AG04449 (cell line): ENCODE measurements at regions of chr10 and their contacts with region 1.

Region 1: DNA sequence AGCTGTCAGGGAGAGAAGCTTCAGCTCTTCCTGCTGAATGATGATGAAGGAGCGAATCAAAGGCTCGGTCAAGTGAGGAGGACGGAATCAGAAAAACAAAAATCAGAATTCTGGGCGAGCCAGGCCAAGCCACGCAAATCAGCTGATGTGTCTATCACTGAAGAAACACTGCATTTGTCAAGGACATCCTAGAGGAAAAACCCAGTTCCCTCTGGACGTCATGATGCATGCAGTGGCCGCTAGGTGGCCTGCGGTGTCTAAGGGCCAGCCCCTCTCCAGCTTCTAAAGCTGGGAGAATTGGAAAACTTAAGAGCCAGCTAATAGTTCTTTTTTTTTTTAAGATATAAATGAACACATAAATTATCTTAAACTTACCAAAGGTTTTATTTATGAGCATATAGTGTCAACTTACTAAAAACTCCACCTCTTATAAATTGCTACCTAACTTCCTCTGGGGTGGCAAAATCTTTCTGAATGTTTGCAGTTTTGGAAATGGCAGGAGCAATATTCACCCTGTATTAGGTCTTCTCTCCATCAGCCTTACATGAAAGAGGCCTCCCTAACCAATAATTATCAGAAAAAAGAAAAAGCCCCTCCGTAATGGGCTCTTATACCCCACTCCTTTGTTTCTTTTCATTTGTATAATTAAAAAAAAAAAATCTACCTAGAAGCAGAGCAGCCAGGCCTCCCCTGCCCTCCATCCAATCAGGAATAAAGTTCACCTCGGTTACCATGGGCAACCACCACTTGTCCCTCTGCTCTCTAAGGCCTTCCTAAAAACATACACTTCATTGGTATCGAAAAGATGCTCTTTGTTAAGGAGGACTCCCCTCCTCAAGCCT is 186.8 kb downstream of the USP6NL start:
- DNase-seq: no peak
- H3K4me3 ChIP-seq: no peak overlapping the region
- CTCF ChIP-seq: peak; percentile 85

Region 2: DNA sequence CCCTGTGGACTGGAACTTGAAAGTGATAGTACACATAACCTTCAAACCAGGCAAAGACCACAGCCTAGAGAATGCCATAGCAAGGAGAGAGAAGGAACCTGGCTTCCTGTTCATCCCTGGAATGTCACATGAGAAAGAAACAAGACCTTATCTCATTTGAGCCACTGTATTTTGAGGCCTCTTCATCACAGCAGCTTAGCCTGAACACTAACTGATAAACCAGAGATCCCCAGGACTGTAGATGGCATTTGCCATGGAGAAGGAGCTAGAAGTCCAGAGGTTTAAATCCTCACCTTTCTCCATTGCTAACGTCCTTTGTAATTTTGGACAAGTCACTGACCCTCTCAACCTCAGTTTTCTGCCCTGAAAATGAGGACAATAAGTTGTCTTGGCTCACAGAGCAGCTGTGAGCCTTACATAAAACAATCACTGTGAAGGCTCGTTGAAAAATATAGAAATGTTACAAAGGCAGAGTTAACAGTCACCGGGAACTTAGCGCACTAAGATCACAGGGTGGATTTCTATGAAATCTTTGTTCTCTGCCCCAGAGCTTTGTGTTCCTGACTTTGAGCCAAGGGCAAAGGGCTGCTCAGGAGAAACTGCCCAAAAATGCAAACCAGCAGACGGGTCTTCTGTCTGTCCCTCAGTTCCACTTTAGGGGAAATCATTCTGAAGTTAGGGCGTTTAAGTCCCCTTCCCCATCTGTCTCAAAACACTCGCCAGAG is 10.2 kb before region 1 on chr10:
- CTCF ChIA-PET with region 1: interaction called, 13 read pairs
- POLR2A ChIA-PET with region 1: no interaction called
- DNase-seq: no peak
- H3K4me3 ChIP-seq: no peak overlapping the region
- CTCF ChIP-seq: no peak

Region 3: DNA sequence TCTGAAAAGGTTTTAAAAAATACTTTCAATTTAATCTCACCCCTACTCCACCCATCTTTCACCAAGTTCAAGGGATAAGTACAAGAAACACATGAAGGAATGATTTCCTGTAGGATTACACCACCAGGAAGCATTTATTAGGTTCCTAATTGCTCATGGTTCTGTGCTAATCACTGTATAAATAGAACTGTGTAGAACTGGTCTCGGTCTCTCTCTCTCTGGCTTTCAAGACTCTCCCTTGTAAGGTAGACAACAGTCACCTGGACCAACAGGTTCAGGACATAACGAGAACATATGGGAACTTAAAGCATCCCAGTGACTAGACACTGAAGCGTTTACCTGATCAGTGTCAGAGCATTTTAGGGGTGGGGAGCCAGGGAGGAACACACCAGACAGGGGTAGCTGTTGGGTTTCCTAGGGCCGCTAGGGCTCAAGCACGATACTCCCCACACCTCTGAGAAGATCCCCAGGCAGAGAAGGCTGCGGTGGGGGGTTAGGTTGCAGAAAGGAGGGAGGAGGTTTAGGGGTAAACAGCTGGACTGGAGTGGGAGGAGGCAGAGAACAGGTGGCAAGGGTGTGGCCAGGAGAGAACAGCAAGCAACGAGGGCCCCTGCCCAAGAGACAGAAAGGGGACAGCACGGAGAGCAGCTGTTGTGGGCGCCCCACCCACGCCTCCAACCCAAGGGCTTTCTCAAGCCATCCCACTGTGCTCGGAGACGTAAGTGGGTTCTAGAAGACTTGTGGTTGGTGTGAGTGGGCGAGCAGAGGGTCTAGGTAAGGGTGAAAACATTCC is 239.3 kb after region 1 on chr10:
- CTCF ChIA-PET with region 1: no interaction called
- POLR2A ChIA-PET with region 1: no interaction called
- DNase-seq: no peak
- H3K4me3 ChIP-seq: no peak overlapping the region
- CTCF ChIP-seq: no peak